Left ventricle myocardium inferior (tissue), 1 donor: ENCODE measurements at regions of chr13 and their contacts with region 1.

Region 1: GRCh38 chr13:26707122-26708006 is 53.2 kb downstream of the GPR12 start:
- DNase-seq: no peak
- H3K4me3 ChIP-seq: no peak overlapping the region
- H3K27ac ChIP-seq: no peak overlapping the region
- H3K4me1 ChIP-seq: no peaks in the 10 kb centered on the region
- H3K27me3 ChIP-seq: peaks cover 47% of the 10 kb centered on the region
- CTCF ChIP-seq: peak; percentile 80

Region 2: GRCh38 chr13:26678796-26679195 is 28.6 kb before region 1 on chr13:
- intact Hi-C with region 1: no loop called
- DNase-seq: no peak
- H3K4me3 ChIP-seq: no peak overlapping the region
- H3K27ac ChIP-seq: no peak overlapping the region
- H3K4me1 ChIP-seq: no peaks in the 10 kb centered on the region
- H3K27me3 ChIP-seq: no peaks in the 10 kb centered on the region
- CTCF ChIP-seq: no peak

Region 3: DNA sequence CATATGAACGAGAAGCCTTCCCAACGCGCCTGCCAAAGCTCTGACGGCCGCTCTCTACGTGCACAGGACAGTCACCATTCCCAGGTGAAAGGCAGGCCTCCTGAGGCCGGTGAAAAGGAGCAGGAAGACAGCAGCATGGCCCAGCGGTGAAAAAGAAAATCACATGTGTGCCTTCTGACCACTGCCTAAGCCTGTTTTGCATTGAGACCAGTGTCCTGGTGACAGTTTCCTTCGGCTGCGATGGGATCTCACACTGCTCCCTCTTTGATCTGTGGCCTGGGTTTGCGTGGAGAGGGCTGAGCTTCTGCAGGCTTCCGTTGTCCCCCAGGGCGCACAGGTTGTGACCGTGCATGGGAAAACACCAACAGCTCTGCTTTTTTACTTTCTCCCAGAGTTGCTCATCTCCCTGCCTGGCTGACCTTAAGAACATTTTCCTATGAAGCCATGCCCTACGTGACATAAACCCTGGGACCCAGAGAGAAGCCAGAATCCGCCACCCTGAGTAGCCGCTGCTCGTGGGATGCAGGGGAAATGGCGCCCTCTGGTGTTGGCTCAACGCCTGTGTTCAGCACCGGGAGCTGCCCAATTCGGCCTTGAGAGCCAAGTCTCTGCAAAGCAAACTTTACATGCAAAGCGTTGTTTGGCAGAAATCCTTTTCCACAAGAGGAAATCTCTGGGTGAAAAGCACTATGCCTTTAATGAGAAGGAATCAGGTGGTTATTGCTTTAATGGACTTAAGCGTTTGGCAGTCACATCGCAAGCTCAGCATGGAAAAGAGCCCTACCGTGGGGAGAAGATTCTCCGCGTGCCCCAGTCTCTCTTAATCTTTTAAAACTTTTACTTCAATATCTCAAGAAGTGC is 165.4 kb after region 1 on chr13:
- intact Hi-C with region 1: loop called (anchors 5 kb)
- DNase-seq: peak; percentile 46
- H3K4me3 ChIP-seq: no peak overlapping the region
- H3K27ac ChIP-seq: no peak overlapping the region
- H3K4me1 ChIP-seq: no peaks in the 10 kb centered on the region
- H3K27me3 ChIP-seq: peaks cover 78% of the 10 kb centered on the region
- CTCF ChIP-seq: peak; percentile 79

Region 4: GRCh38 chr13:26929971-26930730 is 222.8 kb after region 1 on chr13:
- intact Hi-C with region 1: loop called (anchors 5 kb)
- DNase-seq: peak; percentile 62
- H3K4me3 ChIP-seq: no peak overlapping the region
- H3K27ac ChIP-seq: no peak overlapping the region
- H3K4me1 ChIP-seq: no peaks in the 10 kb centered on the region
- H3K27me3 ChIP-seq: peaks cover 22% of the 10 kb centered on the region
- CTCF ChIP-seq: peak; percentile 97